ENCODE measurements at regions of chr6 and their contacts with region 1.

Region 1: GRCh38 chr6:159062564-159062945 is 17.8 kb upstream of the TAGAP start:
- DNase-seq: peak in 8 of 9 experiments; percentile 48 to 91 (median 70)
- ATAC-seq: peak; percentile 90
- H3K4me3 ChIP-seq: peak overlapping the region in 1 of 2 experiments; percentile 27
- H3K4me3 Mint-ChIP-seq: peak overlapping the region; percentile 68
- H3K27ac ChIP-seq: peak overlapping the region; percentile 87 to 92
- H3K27ac Mint-ChIP-seq: peak overlapping the region; percentile 93
- H3K4me1 ChIP-seq: peaks cover 57% of the 10 kb centered on the region
- H3K4me1 Mint-ChIP-seq: peaks cover 83% of the 10 kb centered on the region
- H3K27me3 ChIP-seq: no peaks in the 10 kb centered on the region
- H3K27me3 Mint-ChIP-seq: no peaks in the 10 kb centered on the region
- CTCF ChIP-seq: no peak

Region 2: DNA sequence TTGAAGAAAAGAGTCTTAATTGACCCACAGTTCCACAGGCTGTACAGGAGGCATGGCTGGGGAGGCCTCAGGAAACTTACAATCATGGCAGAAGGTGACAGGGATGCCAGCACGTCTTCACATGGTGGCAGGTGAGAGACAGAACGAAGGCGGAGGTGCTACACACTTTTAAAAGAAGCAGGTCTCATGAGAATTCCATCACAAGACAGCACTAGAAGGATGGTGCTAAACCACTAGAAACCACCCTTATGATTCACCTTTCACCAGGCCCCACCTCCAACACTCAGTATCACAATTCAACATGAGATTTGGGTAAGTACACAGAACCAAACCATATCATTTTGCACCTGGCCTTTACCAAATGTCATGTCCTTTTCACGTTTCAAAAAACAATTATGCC is 38.7 kb before region 1 on chr6:
- CTCF ChIA-PET with region 1: no interaction called
- POLR2A ChIA-PET with region 1: no interaction called
- intact Hi-C with region 1: no loop called
- DNase-seq: peak in 2 of 9 experiments; percentile 44 to 56
- ATAC-seq: peak; percentile 23
- H3K4me3 ChIP-seq: no peak overlapping the region
- H3K4me3 Mint-ChIP-seq: no peak overlapping the region
- H3K27ac ChIP-seq: no peak overlapping the region
- H3K27ac Mint-ChIP-seq: peak overlapping the region; percentile 35
- H3K4me1 ChIP-seq: peaks cover 3% of the 10 kb centered on the region
- H3K4me1 Mint-ChIP-seq: peaks cover 7% of the 10 kb centered on the region
- H3K27me3 ChIP-seq: no peaks in the 10 kb centered on the region
- H3K27me3 Mint-ChIP-seq: no peaks in the 10 kb centered on the region
- CTCF ChIP-seq: no peak

Region 3: GRCh38 chr6:159074120-159074684 is 11.6 kb after region 1 on chr6:
- CTCF ChIA-PET with region 1: interaction called, 4 read pairs
- POLR2A ChIA-PET with region 1: interaction called, 10 read pairs
- intact Hi-C with region 1: loop called in 1 of 2 experiments (anchors 1 kb)
- DNase-seq: no peak
- ATAC-seq: no peak
- H3K4me3 ChIP-seq: no peak overlapping the region
- H3K4me3 Mint-ChIP-seq: no peak overlapping the region
- H3K27ac ChIP-seq: no peak overlapping the region
- H3K27ac Mint-ChIP-seq: no peak overlapping the region
- H3K4me1 ChIP-seq: peaks cover 22% of the 10 kb centered on the region
- H3K4me1 Mint-ChIP-seq: peaks cover 46% of the 10 kb centered on the region
- H3K27me3 ChIP-seq: no peaks in the 10 kb centered on the region
- H3K27me3 Mint-ChIP-seq: no peaks in the 10 kb centered on the region
- CTCF ChIP-seq: no peak

Region 4: GRCh38 chr6:159080217-159080976 is 17.8 kb after region 1 on chr6:
- CTCF ChIA-PET with region 1: interaction called, 5 read pairs
- POLR2A ChIA-PET with region 1: interaction called, 14 read pairs
- intact Hi-C with region 1: loop called (anchors 1 to 2 kb)
- DNase-seq: peak in 1 of 9 experiments; percentile 52
- ATAC-seq: peak; percentile 65
- H3K4me3 ChIP-seq: no peak overlapping the region
- H3K4me3 Mint-ChIP-seq: peak overlapping the region; percentile 37
- H3K27ac ChIP-seq: no peak overlapping the region
- H3K27ac Mint-ChIP-seq: peak overlapping the region; percentile 72
- H3K4me1 ChIP-seq: peaks cover 36% of the 10 kb centered on the region
- H3K4me1 Mint-ChIP-seq: peaks cover 46% of the 10 kb centered on the region
- H3K27me3 ChIP-seq: no peaks in the 10 kb centered on the region
- H3K27me3 Mint-ChIP-seq: no peaks in the 10 kb centered on the region
- CTCF ChIP-seq: no peak

Region 5: GRCh38 chr6:159098636-159099106 is 36.1 kb after region 1 on chr6:
- CTCF ChIA-PET with region 1: interaction called, 44 read pairs
- POLR2A ChIA-PET with region 1: interaction called, 11 read pairs
- intact Hi-C with region 1: loop called (anchors 1 to 2 kb)
- DNase-seq: peak; percentile 33 to 94 (median 69)
- ATAC-seq: peak; percentile 79
- H3K4me3 ChIP-seq: peak overlapping the region in 1 of 2 experiments; percentile 25
- H3K4me3 Mint-ChIP-seq: peak overlapping the region; percentile 74
- H3K27ac ChIP-seq: peak overlapping the region; percentile 48 to 85
- H3K27ac Mint-ChIP-seq: peak overlapping the region; percentile 94
- H3K4me1 ChIP-seq: peaks cover 60% of the 10 kb centered on the region
- H3K4me1 Mint-ChIP-seq: peaks cover 69% of the 10 kb centered on the region
- H3K27me3 ChIP-seq: no peaks in the 10 kb centered on the region
- H3K27me3 Mint-ChIP-seq: no peaks in the 10 kb centered on the region
- CTCF ChIP-seq: no peak

Region 6: GRCh38 chr6:160667639-160668481 is 1605.3 kb after region 1 on chr6:
- CTCF ChIA-PET with region 1: no interaction called
- POLR2A ChIA-PET with region 1: no interaction called
- intact Hi-C with region 1: no loop called
- DNase-seq: peak in 3 of 9 experiments; percentile 12 to 37 (median 30)
- ATAC-seq: no peak
- H3K4me3 ChIP-seq: no peak overlapping the region
- H3K4me3 Mint-ChIP-seq: no peak overlapping the region
- H3K27ac ChIP-seq: no peak overlapping the region
- H3K27ac Mint-ChIP-seq: no peak overlapping the region
- H3K4me1 ChIP-seq: no peaks in the 10 kb centered on the region
- H3K4me1 Mint-ChIP-seq: no peaks in the 10 kb centered on the region
- H3K27me3 ChIP-seq: peaks cover 0 to 2% of the 10 kb centered on the region in 2 experiments
- H3K27me3 Mint-ChIP-seq: peaks cover 10% of the 10 kb centered on the region
- CTCF ChIP-seq: no peak